ENCODE measurements at regions of chr5 and their contacts with region 1.

Region 1: DNA sequence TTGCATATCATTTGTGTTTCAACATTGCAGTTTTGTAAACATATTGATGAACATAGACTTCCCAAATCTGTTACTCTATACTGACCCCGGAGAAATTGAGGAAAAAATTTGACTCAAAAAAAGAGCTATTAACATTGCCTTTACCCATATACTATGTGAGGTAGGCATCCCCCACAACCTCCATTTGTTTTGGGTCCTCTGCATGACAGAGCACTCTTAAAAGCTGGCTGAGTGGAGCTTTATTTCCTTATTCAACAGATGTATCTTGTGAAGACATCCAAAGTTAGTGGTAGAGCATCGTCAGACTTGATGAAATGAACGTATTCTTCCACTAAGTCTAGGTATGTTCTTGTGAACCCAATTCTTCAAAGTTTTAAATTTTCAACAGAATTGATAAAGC is 310.5 kb downstream of the CDH9 start:
- DNase-seq: no peak
- ATAC-seq: no peak

Region 2: GRCh38 chr5:26582350-26583046 is 145.4 kb before region 1 on chr5:
- intact Hi-C with region 1: no loop called
- DNase-seq: no peak
- ATAC-seq: no peak

Region 3: GRCh38 chr5:27911216-27911615 is 1183.3 kb after region 1 on chr5:
- intact Hi-C with region 1: loop called (anchors 5 kb)
- DNase-seq: no peak
- ATAC-seq: no peak

Measured in sciatic nerve (tissue), 2 donors.